GM12878 (cell line): ENCODE measurements at regions of chr9 and their contacts with region 1.

Region 1: GRCh38 chr9:136482793-136483588 is at the start of gene SEC16A:
- DNase-seq: peak; percentile 81
- ATAC-seq: peak; percentile 79
- H3K4me3 ChIP-seq: peak within 1 kb of the TSS; percentile 92
- H3K27ac ChIP-seq: peak within 1 kb of the TSS; percentile 99
- H3K4me1 ChIP-seq: peaks cover 6% of the 10 kb centered on the region; the same call in 1 of the 2 replicates
- H3K27me3 ChIP-seq: no peaks in the 10 kb centered on the region
- CTCF ChIP-seq: no peak
- EP300 ChIP-seq: no peak
- POLR2A ChIP-seq: peak; percentile 97
- RAD21 ChIP-seq: no peak
- polyA plus RNA-seq, gene SEC16A: 12.4 to 16.6 TPM

Region 2: DNA sequence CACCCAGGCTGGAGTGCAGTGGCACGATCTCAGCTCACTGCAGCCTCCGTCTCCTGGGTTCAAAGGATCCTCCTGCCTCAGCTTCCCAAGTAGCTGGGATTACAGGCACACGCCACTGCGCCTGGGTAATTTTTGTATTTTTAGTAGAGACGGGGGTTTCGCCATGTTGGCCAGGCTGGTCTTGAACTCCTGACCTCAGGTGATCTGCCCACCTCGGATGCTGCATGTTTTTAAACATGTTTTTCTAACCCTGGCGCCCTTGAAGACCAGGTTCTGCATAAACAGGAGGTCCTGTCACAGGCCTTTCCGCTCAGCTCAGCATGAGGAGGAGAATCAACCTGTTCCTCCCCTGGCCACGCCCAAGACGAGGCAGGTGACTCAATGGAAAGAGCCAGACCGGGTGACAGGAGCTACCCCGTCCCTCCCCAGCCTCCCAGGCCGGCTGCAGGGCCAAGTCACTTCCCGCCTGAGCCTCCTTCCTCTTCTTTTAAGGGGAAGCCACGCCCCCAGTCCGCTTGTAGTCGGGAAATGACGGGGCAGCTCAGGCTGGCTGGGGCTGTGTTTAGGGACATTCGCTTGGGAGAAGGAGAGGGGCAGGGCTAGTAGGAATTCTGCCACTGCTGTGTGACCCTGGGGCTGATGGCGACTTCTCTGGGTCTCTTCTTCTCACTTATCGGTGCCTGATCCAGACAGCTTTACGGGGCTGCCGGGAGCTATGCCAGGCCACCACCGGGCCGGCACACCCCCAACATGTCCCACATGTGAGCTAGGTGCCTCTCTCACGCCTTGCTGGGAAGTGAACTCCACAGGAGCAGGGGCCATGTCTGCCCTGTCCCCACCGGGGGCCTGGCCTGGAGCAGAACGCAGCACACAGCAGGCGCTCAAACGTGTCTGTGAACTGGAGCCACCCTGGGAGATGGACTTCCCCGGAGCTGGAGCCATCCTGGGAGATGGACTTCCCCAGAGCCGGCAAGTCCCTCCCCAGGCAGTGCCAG is 56.7 kb after region 1 on chr9:
- CTCF ChIA-PET with region 1: interaction called, 27 read pairs
- POLR2A ChIA-PET with region 1: interaction called, 3 read pairs
- RAD21 ChIA-PET with region 1: interaction called, 10 read pairs
- SMC1A ChIA-PET with region 1: interaction called, 4 read pairs
- in situ Hi-C with region 1: no loop called
- intact Hi-C with region 1: no loop called
- DNase-seq: peak; percentile 70
- ATAC-seq: peak; percentile 84
- H3K4me3 ChIP-seq: peak overlapping the region; percentile 13
- H3K27ac ChIP-seq: peak overlapping the region; percentile 64
- H3K4me1 ChIP-seq: peaks cover 56% of the 10 kb centered on the region
- H3K27me3 ChIP-seq: no peaks in the 10 kb centered on the region
- CTCF ChIP-seq: no peak
- EP300 ChIP-seq: no peak
- POLR2A ChIP-seq: peak; percentile 50; the same call in 1 of the 2 replicates
- RAD21 ChIP-seq: no peak

Region 3: GRCh38 chr9:136625101-136626060 is 142.4 kb after region 1 on chr9:
- CTCF ChIA-PET with region 1: interaction called, 223 read pairs
- POLR2A ChIA-PET with region 1: interaction called, 4 read pairs
- RAD21 ChIA-PET with region 1: interaction called, 126 read pairs
- SMC1A ChIA-PET with region 1: interaction called, 60 read pairs
- in situ Hi-C with region 1: no loop called
- intact Hi-C with region 1: no loop called
- DNase-seq: no peak
- ATAC-seq: no peak; the same call in 1 of the 3 replicates
- H3K4me3 ChIP-seq: no peak overlapping the region
- H3K27ac ChIP-seq: no peak overlapping the region
- H3K4me1 ChIP-seq: no peaks in the 10 kb centered on the region; the same call in 1 of the 2 replicates
- H3K27me3 ChIP-seq: no peaks in the 10 kb centered on the region; a peak in 1 of 4 replicates
- CTCF ChIP-seq: peak; percentile 7 to 52 (median 31); a peak in 2 of 6 replicates
- EP300 ChIP-seq: no peak
- POLR2A ChIP-seq: no peak
- RAD21 ChIP-seq: peak; percentile 54

Region 4: DNA sequence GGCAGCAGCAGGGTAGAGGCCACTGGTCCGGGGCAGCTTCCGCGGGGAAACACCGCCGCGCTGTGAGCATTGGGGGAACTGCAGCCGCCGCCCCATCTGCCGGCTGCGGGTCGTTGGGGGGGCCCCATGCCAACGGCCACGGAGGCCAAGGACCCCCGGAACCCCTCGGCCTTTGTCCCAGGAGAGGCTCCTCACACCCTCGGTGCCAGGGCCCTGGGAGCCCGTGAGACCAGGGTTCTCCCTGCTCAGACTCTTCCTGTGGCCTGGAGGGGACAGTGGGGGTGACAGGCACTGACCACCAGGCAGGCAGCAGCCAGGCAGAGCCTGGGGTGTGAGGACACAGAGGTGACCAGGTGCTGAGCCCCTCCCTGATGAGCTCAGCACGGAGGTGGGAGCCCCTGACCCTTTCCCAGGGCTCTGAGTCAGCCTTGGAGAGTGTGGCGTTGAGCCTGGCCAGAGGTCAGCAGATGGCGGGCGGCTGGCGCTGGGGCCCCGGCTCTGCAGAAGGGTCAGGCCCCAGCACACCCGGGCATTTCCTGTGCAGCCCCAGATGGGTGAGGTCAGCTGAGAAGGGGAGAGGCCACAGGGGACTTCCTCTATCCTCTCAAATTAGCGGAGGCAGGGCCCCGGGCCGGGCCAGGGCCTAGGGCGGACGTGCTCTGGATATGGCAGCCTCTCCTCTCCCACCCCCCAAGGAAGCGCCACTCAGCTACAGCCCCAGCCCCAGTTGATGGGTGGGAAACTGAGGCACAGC is 161.8 kb after region 1 on chr9:
- CTCF ChIA-PET with region 1: interaction called, 16 read pairs
- POLR2A ChIA-PET with region 1: no interaction called
- RAD21 ChIA-PET with region 1: interaction called, 6 read pairs
- SMC1A ChIA-PET with region 1: interaction called, 3 read pairs
- in situ Hi-C with region 1: no loop called
- intact Hi-C with region 1: no loop called
- DNase-seq: no peak
- ATAC-seq: peak; percentile 96
- H3K4me3 ChIP-seq: no peak overlapping the region; the same call in 1 of the 2 replicates
- H3K27ac ChIP-seq: no peak overlapping the region
- H3K4me1 ChIP-seq: peaks cover 12% of the 10 kb centered on the region
- H3K27me3 ChIP-seq: peaks cover 0 to 5% of the 10 kb centered on the region in 2 experiments; a peak in 3 of 4 replicates
- CTCF ChIP-seq: peak; percentile 81 to 97 (median 85)
- EP300 ChIP-seq: no peak
- POLR2A ChIP-seq: no peak
- RAD21 ChIP-seq: peak; percentile 42

Region 5: GRCh38 chr9:136728080-136728547 is 245.1 kb after region 1 on chr9:
- CTCF ChIA-PET with region 1: interaction called, 10 read pairs
- POLR2A ChIA-PET with region 1: no interaction called
- RAD21 ChIA-PET with region 1: no interaction called
- SMC1A ChIA-PET with region 1: no interaction called
- in situ Hi-C with region 1: no loop called
- intact Hi-C with region 1: no loop called
- DNase-seq: peak; percentile 39
- ATAC-seq: peak; percentile 79
- H3K4me3 ChIP-seq: peak overlapping the region; percentile 76
- H3K27ac ChIP-seq: peak overlapping the region; percentile 54
- H3K4me1 ChIP-seq: peaks cover 13% of the 10 kb centered on the region
- H3K27me3 ChIP-seq: no peaks in the 10 kb centered on the region
- CTCF ChIP-seq: peak; percentile 79 to 99 (median 88)
- EP300 ChIP-seq: peak in 1 of 2 experiments; percentile 39; a peak in 1 of 4 replicates
- POLR2A ChIP-seq: peak; percentile 99
- RAD21 ChIP-seq: no peak

Region 6: GRCh38 chr9:137918331-137919094 is 1435.5 kb after region 1 on chr9:
- CTCF ChIA-PET with region 1: no interaction called
- POLR2A ChIA-PET with region 1: no interaction called
- RAD21 ChIA-PET with region 1: no interaction called
- SMC1A ChIA-PET with region 1: no interaction called
- in situ Hi-C with region 1: no loop called
- intact Hi-C with region 1: no loop called
- DNase-seq: no peak
- ATAC-seq: no peak
- H3K4me3 ChIP-seq: no peak overlapping the region
- H3K27ac ChIP-seq: no peak overlapping the region
- H3K4me1 ChIP-seq: no peaks in the 10 kb centered on the region
- H3K27me3 ChIP-seq: no peaks in the 10 kb centered on the region
- CTCF ChIP-seq: no peak
- EP300 ChIP-seq: no peak
- POLR2A ChIP-seq: no peak
- RAD21 ChIP-seq: no peak